H1 (cell line): ENCODE measurements at regions of chrX and their contacts with region 1.

Region 1: DNA sequence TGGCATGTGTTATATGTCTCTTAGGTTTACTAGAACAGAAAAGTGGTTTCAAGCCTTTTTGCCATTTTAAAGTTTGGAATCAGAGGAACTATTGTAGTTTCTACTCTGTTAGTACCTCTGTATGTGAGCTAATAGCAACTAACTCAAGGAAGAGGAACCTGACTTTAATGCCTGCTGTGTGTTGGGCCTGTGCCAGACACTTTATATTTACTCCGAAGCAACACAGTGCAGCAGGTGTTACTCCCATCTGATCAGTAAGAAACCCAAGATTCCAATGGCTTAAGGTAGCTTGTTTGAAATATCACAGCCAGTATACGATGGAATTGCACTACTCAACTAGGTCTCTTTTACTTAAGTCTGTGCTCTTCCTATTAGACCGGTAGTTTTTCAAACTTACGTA is 79.2 kb downstream of the USP9X start:
- DNase-seq: no peak
- H3K4me3 ChIP-seq: no peak overlapping the region
- H3K27ac ChIP-seq: no peak overlapping the region
- H3K4me1 ChIP-seq: no peaks in the 10 kb centered on the region
- H3K27me3 ChIP-seq: no peaks in the 10 kb centered on the region
- CTCF ChIP-seq: no peak
- EP300 ChIP-seq: no peak
- POLR2A ChIP-seq: no peak
- RAD21 ChIP-seq: no peak

Region 2: DNA sequence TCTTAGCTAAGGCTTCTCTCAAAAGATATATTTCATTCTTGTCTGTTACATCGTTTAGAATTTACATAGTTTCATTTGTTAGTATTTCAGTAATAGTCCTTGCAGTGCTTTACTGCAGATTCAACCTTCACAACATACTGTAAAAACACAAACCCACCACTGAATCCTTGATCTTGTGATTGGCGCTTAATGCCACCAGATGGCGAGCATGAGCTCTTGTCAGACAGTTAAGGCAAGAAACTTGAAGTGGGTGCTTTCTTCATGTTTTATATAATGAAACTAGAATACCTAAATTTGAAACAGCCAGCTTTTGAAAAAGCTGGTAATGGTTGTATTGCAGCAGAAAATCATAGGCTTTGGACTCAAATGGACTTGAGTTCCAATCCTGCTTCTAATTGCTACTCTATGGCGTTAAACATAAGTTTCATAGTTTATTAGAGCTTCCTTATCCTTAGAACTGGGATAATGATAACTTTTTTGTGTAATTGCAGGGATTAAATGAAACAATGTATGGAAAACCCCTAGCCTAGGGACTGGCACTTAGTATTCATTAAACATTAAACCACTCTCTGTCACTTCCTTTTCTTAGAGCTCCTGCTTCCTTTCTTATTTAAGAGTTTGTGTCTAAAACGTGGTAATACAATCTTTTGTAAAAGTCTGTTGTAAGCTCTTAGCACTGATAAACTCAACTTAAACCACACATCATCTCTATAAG is 15.9 kb after region 1 on chrX:
- CTCF ChIA-PET with region 1: interaction called, 18 read pairs
- POLR2A ChIA-PET with region 1: no interaction called
- DNase-seq: no peak
- H3K4me3 ChIP-seq: no peak overlapping the region
- H3K27ac ChIP-seq: no peak overlapping the region
- H3K4me1 ChIP-seq: 0 out of 7 replicates have a peak, but pooled peaks cover 0 to 2% (median 0%) of the 10 kb centered on the region in 4 experiments
- H3K27me3 ChIP-seq: no peaks in the 10 kb centered on the region
- CTCF ChIP-seq: peak in 2 of 3 experiments; percentile 38 to 48; a peak in 3 of 4 replicates
- EP300 ChIP-seq: no peak
- POLR2A ChIP-seq: no peak
- RAD21 ChIP-seq: peak; percentile 3 to 18; a peak in 1 of 4 replicates